Mammary epithelial cell (primary cell): ENCODE measurements at regions of chr15 and their contacts with region 1.

Region 1: DNA sequence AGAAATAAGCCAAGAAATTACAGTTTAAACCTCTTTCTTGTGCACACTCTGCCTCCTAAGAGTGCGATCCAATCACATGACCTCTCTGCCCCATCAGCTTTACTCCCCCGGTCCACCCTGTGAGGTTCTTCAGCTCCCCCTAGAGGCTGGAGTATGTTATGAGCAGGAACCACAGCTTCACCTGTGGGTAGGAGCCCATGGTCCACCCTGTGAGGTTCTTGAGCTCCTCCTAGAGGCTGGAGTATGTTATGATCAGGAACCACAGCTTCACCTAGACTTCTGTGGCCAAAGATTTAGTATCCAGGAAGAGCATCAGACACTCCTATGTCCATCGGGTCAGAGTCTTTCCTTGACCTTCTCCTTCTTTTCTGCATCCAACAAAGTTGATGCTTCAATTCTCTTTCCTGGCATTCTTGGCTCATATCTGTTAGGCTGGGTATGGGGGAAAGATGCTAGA is 163.9 kb downstream of the MINAR1 start:
- DNase-seq: peak; percentile 81
- H3K4me3 ChIP-seq: no peak overlapping the region
- H3K27ac ChIP-seq: no peak overlapping the region
- H3K4me1 ChIP-seq: no peaks in the 10 kb centered on the region
- H3K27me3 ChIP-seq: peaks cover 3% of the 10 kb centered on the region
- CTCF ChIP-seq: peak; percentile 99

Region 2: DNA sequence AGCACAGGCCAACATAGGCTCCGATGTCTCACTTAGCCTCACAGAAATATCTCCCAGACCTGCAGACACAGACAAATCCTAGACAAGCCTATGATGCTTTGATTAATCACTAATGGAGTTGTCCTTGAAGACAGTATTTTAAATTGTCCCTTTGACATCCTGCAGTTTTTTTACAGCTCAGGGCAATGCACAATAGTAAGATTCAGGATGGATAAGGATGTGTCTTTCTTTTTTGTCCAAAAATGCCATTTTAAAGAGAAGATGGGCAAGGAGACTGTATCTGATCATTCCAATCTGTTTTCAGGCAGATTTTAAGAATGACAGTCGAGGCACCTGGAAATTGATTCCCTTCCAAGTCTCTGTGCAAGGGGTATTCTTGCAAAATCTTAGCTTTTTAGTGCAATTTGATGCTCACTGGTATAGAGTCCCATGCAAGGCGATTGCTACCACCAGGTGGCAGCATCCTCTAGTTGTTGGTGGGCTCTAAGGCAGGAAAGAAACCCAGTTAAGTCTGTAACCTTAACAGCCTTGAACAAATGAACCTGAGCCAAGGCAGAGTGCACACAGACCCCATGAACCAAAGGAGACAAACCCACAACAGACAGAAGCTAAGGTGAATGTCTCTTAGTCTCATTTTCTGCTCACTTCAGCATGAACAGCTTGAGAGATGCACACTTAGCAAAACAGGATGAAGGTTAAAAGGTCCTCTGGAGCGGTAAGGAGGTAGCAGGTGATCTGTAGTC is 215.2 kb before region 1 on chr15:
- CTCF ChIA-PET with region 1: interaction called, 24 read pairs
- dilution Hi-C with region 1: no loop called
- in situ Hi-C with region 1: loop called in 1 of 2 experiments (anchors 10 kb)
- intact Hi-C with region 1: loop called (anchors 1 kb)
- DNase-seq: peak; percentile 42
- H3K4me3 ChIP-seq: no peak overlapping the region
- H3K27ac ChIP-seq: no peak overlapping the region
- H3K4me1 ChIP-seq: no peaks in the 10 kb centered on the region
- H3K27me3 ChIP-seq: no peaks in the 10 kb centered on the region
- CTCF ChIP-seq: peak; percentile 88 to 95

Region 3: DNA sequence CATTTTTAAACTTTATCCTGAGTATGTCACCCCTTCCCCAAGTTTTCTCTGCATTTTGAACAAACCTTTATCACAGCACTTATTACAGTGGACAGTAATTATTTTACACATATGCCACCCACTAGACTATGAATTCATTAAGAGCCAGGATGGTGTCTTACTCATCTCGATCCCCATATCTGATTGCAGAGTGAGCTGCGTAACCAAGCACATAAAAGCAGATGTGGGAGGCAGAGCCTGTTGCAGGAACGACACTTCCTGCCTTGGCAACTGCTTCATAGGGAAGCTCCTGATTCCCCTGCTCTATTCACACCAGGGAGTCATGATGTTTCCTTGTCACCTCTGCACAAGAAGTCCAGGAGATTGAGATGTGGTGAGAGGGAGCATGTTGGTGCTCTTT is 72.8 kb before region 1 on chr15:
- CTCF ChIA-PET with region 1: no interaction called
- dilution Hi-C with region 1: no loop called
- in situ Hi-C with region 1: no loop called
- intact Hi-C with region 1: no loop called
- DNase-seq: no peak
- H3K4me3 ChIP-seq: no peak overlapping the region
- H3K27ac ChIP-seq: no peak overlapping the region
- H3K4me1 ChIP-seq: no peaks in the 10 kb centered on the region
- H3K27me3 ChIP-seq: no peaks in the 10 kb centered on the region
- CTCF ChIP-seq: no peak

Region 4: GRCh38 chr15:79572691-79573404 is 23.2 kb before region 1 on chr15:
- CTCF ChIA-PET with region 1: interaction called, 11 read pairs
- dilution Hi-C with region 1: no loop called
- in situ Hi-C with region 1: no loop called
- intact Hi-C with region 1: no loop called
- DNase-seq: no peak
- H3K4me3 ChIP-seq: no peak overlapping the region
- H3K27ac ChIP-seq: no peak overlapping the region
- H3K4me1 ChIP-seq: no peaks in the 10 kb centered on the region
- H3K27me3 ChIP-seq: no peaks in the 10 kb centered on the region
- CTCF ChIP-seq: no peak

Region 5: GRCh38 chr15:79844221-79844620 is 248.1 kb after region 1 on chr15:
- CTCF ChIA-PET with region 1: no interaction called
- dilution Hi-C with region 1: no loop called
- in situ Hi-C with region 1: no loop called
- intact Hi-C with region 1: no loop called
- DNase-seq: no peak
- H3K4me3 ChIP-seq: no peak overlapping the region
- H3K27ac ChIP-seq: no peak overlapping the region
- H3K4me1 ChIP-seq: no peaks in the 10 kb centered on the region
- H3K27me3 ChIP-seq: no peaks in the 10 kb centered on the region
- CTCF ChIP-seq: no peak

Region 6: DNA sequence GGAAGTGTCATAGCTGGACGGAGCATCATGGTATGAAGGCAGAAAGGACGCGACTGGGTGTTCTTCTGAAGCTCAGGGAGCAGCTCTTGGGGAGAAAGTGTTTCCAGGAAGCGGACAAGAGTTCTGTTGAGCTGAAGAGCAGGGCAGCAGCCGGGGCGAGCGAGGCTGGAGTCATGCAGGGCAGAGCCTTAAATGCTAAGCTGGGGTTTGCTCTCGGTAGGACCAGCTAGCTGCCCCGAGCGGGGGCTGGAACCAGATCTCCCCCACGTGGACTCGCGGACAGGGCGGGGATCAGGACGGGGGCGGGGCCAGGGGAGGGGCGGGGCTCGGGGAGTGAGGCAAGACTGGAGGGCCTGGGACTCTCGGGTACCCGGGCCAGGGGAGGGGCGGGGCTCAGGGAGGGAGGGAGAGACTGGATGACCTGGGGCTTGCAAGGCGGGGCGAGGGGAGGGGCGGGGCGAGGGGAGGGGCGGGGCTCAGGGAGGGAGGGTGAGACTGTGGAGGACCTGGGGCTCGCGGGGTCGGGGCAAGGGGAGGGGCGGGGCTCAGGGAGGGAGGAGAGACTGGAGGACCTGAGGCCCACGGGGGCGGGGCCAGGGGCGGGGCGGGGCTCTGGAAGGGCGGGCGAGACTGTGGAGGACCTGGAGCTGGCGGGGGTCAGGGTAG is 556.2 kb after region 1 on chr15:
- CTCF ChIA-PET with region 1: interaction called, 24 read pairs
- dilution Hi-C with region 1: no loop called
- in situ Hi-C with region 1: no loop called
- intact Hi-C with region 1: no loop called
- DNase-seq: peak; percentile 84
- H3K4me3 ChIP-seq: peak overlapping the region; percentile 46 to 91 (median 54)
- H3K27ac ChIP-seq: peak overlapping the region; percentile 39
- H3K4me1 ChIP-seq: peaks cover 10% of the 10 kb centered on the region
- H3K27me3 ChIP-seq: no peaks in the 10 kb centered on the region
- CTCF ChIP-seq: no peak